ENCODE measurements at regions of chr4 and their contacts with region 1.

Region 1: GRCh38 chr4:153083447-153083947 is 120.7 kb upstream of the TRIM2 start:
- DNase-seq: no peak
- H3K4me3 ChIP-seq: no peak overlapping the region
- H3K27ac ChIP-seq: no peak overlapping the region
- H3K4me1 ChIP-seq: peaks cover 0 to 10% (median 3%) of the 10 kb centered on the region in 4 donors
- H3K27me3 ChIP-seq: no peaks in the 10 kb centered on the region
- CTCF ChIP-seq: peak; percentile 32 to 69 (median 62)
- EP300 ChIP-seq: no peak
- POLR2A ChIP-seq: no peak

Region 2: GRCh38 chr4:152747444-152747843 is 336.1 kb before region 1 on chr4:
- intact Hi-C with region 1: no loop called
- DNase-seq: no peak
- H3K4me3 ChIP-seq: no peak overlapping the region
- H3K27ac ChIP-seq: no peak overlapping the region
- H3K4me1 ChIP-seq: no peaks in the 10 kb centered on the region
- H3K27me3 ChIP-seq: no peaks in the 10 kb centered on the region
- CTCF ChIP-seq: no peak
- EP300 ChIP-seq: no peak
- POLR2A ChIP-seq: no peak

Region 3: GRCh38 chr4:152847415-152847775 is 236.1 kb before region 1 on chr4:
- intact Hi-C with region 1: loop called (anchors 2 kb)
- DNase-seq: no peak
- H3K4me3 ChIP-seq: no peak overlapping the region
- H3K27ac ChIP-seq: no peak overlapping the region
- H3K4me1 ChIP-seq: peaks cover 0 to 10% (median 0%) of the 10 kb centered on the region in 4 donors
- H3K27me3 ChIP-seq: no peaks in the 10 kb centered on the region
- CTCF ChIP-seq: no peak
- EP300 ChIP-seq: no peak
- POLR2A ChIP-seq: no peak

Region 4: DNA sequence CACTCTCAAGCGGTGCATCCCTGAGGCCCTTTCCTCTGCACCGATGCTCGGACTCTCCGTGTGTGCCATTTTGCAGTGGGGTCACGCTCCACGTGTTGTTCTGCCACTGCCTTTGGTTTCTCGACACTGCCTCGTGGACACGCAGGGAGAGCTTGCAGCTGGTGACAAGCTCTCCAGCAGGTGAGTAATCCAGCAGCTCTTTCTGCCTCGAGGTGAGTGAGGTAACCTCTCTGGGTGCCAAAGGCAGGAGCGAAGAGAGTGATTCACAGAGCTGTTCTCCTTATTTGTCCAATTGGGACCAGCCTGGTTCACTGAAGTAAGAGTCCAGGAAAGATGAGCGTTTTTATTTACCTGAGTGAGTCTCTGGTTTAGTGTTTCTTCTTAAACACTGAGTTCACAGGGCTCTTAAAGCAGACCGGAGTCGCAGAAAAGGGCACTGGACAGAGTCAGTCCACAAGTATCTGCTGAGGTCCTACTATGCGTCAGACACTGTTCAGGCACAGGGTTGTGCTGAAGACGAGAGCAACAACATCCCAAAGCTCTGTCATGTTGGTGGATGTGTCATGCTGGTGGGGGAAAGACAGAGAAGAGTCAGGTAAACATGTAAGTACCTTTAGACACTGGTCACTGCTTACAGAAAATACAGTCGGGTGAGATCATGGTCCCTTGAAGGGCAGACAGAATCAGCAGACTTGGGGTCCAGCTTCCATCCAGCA is 85.6 kb before region 1 on chr4:
- intact Hi-C with region 1: no loop called
- DNase-seq: no peak
- H3K4me3 ChIP-seq: no peak overlapping the region
- H3K27ac ChIP-seq: no peak overlapping the region
- H3K4me1 ChIP-seq: no peaks in the 10 kb centered on the region
- H3K27me3 ChIP-seq: no peaks in the 10 kb centered on the region
- CTCF ChIP-seq: no peak
- EP300 ChIP-seq: no peak
- POLR2A ChIP-seq: no peak

Region 5: DNA sequence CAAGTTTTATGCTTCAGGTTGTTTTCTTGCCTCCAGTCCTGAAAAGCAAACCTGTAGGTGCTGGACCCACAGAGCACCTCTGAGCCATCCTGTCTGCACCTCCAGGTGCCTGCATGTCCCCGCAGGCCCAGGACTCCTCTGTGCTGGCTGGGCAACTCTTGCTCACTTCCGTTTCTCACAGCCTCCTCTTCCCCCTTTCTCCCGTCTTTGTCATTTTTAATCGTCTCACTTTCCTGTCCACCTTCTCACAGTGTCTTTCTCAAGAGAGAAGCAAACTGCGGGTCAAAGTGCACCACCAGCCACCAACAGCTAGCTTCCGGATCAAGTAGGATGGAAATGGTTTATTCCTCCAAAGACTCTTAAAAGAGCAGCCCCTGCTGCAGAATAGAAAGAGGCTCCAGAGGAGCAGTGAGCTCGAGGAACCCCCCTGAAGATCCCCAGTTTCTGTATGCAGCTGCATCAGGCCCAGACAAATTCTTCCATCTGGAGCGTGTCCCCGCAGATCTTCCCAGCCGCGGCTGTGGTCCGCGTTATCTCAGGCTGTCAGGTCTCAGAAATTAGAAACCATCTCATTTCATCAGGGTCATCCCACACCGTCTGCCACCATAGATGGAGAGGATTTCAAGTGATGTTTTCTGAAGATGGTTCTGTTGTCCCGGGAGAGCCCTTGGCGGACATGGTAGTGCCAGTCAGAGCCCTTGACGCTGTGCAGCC is 59.7 kb before region 1 on chr4:
- intact Hi-C with region 1: no loop called
- DNase-seq: no peak
- H3K4me3 ChIP-seq: no peak overlapping the region
- H3K27ac ChIP-seq: no peak overlapping the region
- H3K4me1 ChIP-seq: no peaks in the 10 kb centered on the region
- H3K27me3 ChIP-seq: no peaks in the 10 kb centered on the region
- CTCF ChIP-seq: no peak
- EP300 ChIP-seq: no peak
- POLR2A ChIP-seq: no peak

Region 6: DNA sequence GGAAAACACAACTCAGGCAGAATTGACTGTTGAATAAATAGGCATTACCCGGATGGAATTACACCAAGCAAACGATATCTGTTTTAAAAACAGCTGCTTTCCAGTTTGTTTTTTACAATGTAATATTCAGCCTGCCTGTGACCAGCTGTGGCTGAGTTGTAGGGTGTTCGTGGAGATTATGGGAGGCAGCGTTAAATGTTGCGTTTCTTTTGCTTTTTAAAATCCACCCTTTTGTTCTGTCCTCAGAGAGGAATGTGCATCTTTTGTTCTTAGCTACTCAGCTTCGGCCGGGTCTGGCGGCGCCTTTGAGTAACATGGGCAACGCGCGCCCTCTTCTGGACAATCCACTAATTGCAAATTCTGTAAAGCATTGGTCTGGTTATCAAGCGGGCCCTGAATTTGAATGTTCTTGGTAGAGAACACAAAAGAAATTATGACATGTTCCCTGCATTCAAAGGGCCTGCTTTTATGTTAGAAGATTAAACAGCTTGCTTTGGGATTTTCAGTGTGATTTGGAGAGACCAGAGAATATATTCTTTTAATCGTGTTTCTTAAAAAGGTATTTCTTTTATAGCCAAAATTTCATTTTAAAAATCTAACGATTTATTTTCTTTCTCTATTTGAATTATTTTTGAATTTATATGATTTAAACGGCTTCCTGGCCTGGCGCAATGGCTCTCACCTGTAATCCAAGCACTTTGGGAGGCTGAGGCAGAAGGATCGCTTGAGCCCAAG is 44.4 kb after region 1 on chr4:
- intact Hi-C with region 1: loop called (anchors 1 kb)
- DNase-seq: peak; percentile 88
- H3K4me3 ChIP-seq: no peak overlapping the region
- H3K27ac ChIP-seq: no peak overlapping the region
- H3K4me1 ChIP-seq: peaks cover 0 to 9% (median 1%) of the 10 kb centered on the region in 4 donors
- H3K27me3 ChIP-seq: no peaks in the 10 kb centered on the region
- CTCF ChIP-seq: peak; percentile 32 to 81 (median 74)
- EP300 ChIP-seq: no peak
- POLR2A ChIP-seq: no peak

Measured in sigmoid colon (tissue), 7 donors.